H1 (cell line): ENCODE measurements at regions of chr17 and their contacts with region 1.

Region 1: GRCh38 chr17:39699818-39700147 is at the start of gene ERBB2:
- DNase-seq: peak in 1 of 2 experiments; percentile 67
- H3K4me3 ChIP-seq: peak within 1 kb of the TSS; percentile 78 to 98 (median 89)
- H3K27ac ChIP-seq: peak within 1 kb of the TSS; percentile 68; the same call in 1 of the 2 replicates
- H3K4me1 ChIP-seq: peaks cover 26 to 48% (median 33%) of the 10 kb centered on the region in 4 experiments
- H3K27me3 ChIP-seq: no peaks in the 10 kb centered on the region
- CTCF ChIP-seq: no peak
- EP300 ChIP-seq: no peak
- POLR2A ChIP-seq: peak in 1 of 2 experiments; percentile 59; a peak in 1 of 3 replicates
- RAD21 ChIP-seq: no peak
- total RNA-seq, gene ERBB2: 394 and 403 TPM in 2 replicates

Region 2: GRCh38 chr17:39676198-39676819 is 23.5 kb before region 1 on chr17:
- CTCF ChIA-PET with region 1: interaction called, 28 read pairs
- POLR2A ChIA-PET with region 1: interaction called, 708 read pairs
- DNase-seq: no peak
- H3K4me3 ChIP-seq: no peak overlapping the region
- H3K27ac ChIP-seq: no peak overlapping the region
- H3K4me1 ChIP-seq: peaks cover 0 to 15% (median 8%) of the 10 kb centered on the region in 4 experiments; a peak in 6 of 7 replicates
- H3K27me3 ChIP-seq: peaks cover 0 to 3% (median 0%) of the 10 kb centered on the region in 4 experiments; a peak in 1 of 7 replicates
- CTCF ChIP-seq: no peak
- EP300 ChIP-seq: no peak
- POLR2A ChIP-seq: no peak
- RAD21 ChIP-seq: no peak

Region 3: GRCh38 chr17:39716879-39717536 is 17.2 kb after region 1 on chr17:
- CTCF ChIA-PET with region 1: interaction called, 10 read pairs
- POLR2A ChIA-PET with region 1: interaction called, 23 read pairs
- DNase-seq: no peak
- H3K4me3 ChIP-seq: no peak overlapping the region
- H3K27ac ChIP-seq: no peak overlapping the region
- H3K4me1 ChIP-seq: no peaks in the 10 kb centered on the region
- H3K27me3 ChIP-seq: no peaks in the 10 kb centered on the region
- CTCF ChIP-seq: no peak
- EP300 ChIP-seq: no peak
- POLR2A ChIP-seq: no peak; a peak in 1 of 3 replicates
- RAD21 ChIP-seq: no peak